ENCODE measurements at regions of chr4 and their contacts with region 1.

Region 1: GRCh38 chr4:186191200-186192065 is at the start of gene CYP4V2:
- DNase-seq: peak; percentile 90
- H3K4me3 Mint-ChIP-seq: peak within 1 kb of the TSS; percentile 93
- H3K27ac Mint-ChIP-seq: peak within 1 kb of the TSS; percentile 92
- H3K4me1 Mint-ChIP-seq: peaks cover 34% of the 10 kb centered on the region
- H3K27me3 Mint-ChIP-seq: no peaks in the 10 kb centered on the region
- total RNA-seq, gene CYP4V2: 4.9 to 5.2 TPM

Region 2: GRCh38 chr4:185849664-185850550 is 341.5 kb before region 1 on chr4:
- CTCF ChIA-PET with region 1: no interaction called
- POLR2A ChIA-PET with region 1: no interaction called
- intact Hi-C with region 1: no loop called
- DNase-seq: no peak
- H3K4me3 Mint-ChIP-seq: no peak overlapping the region
- H3K27ac Mint-ChIP-seq: no peak overlapping the region
- H3K4me1 Mint-ChIP-seq: no peaks in the 10 kb centered on the region
- H3K27me3 Mint-ChIP-seq: peaks cover 2% of the 10 kb centered on the region

Region 3: GRCh38 chr4:186067757-186068385 is 123.6 kb before region 1 on chr4:
- CTCF ChIA-PET with region 1: interaction called, 10 read pairs
- POLR2A ChIA-PET with region 1: no interaction called
- intact Hi-C with region 1: no loop called
- DNase-seq: peak; percentile 58
- H3K4me3 Mint-ChIP-seq: no peak overlapping the region
- H3K27ac Mint-ChIP-seq: no peak overlapping the region
- H3K4me1 Mint-ChIP-seq: peaks cover 15% of the 10 kb centered on the region
- H3K27me3 Mint-ChIP-seq: peaks cover 6% of the 10 kb centered on the region

Region 4: GRCh38 chr4:186144142-186144955 is 47.1 kb before region 1 on chr4:
- CTCF ChIA-PET with region 1: interaction called, 4 read pairs
- POLR2A ChIA-PET with region 1: no interaction called
- intact Hi-C with region 1: loop called (anchors 2 kb)
- DNase-seq: peak; percentile 25
- H3K4me3 Mint-ChIP-seq: peak overlapping the region; percentile 71
- H3K27ac Mint-ChIP-seq: no peak overlapping the region
- H3K4me1 Mint-ChIP-seq: peaks cover 9% of the 10 kb centered on the region
- H3K27me3 Mint-ChIP-seq: peaks cover 39% of the 10 kb centered on the region

Region 5: DNA sequence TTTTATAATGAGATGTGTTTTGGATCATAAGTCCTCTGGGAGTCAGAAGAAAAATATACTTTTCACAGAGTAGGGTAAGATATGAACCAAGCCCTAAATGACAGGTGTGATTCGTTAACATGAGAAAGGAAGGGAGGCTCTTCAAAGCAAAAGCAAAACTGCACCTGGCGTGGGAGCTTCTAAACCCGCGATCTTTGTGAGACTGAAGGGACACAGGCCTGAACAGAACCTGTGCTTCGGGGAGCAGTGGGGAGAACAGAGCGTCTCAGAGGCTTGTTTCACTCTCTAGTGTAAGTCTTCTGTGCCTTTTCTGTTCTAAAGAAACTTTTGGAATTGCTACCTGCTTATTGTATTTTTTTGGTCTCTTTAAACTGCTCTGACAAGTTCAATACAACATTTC is 30.3 kb before region 1 on chr4:
- CTCF ChIA-PET with region 1: interaction called, 3 read pairs
- POLR2A ChIA-PET with region 1: no interaction called
- intact Hi-C with region 1: loop called (anchors 2 kb)
- DNase-seq: peak; percentile 60
- H3K4me3 Mint-ChIP-seq: peak overlapping the region; percentile 40
- H3K27ac Mint-ChIP-seq: no peak overlapping the region
- H3K4me1 Mint-ChIP-seq: peaks cover 5% of the 10 kb centered on the region
- H3K27me3 Mint-ChIP-seq: no peaks in the 10 kb centered on the region

Region 6: DNA sequence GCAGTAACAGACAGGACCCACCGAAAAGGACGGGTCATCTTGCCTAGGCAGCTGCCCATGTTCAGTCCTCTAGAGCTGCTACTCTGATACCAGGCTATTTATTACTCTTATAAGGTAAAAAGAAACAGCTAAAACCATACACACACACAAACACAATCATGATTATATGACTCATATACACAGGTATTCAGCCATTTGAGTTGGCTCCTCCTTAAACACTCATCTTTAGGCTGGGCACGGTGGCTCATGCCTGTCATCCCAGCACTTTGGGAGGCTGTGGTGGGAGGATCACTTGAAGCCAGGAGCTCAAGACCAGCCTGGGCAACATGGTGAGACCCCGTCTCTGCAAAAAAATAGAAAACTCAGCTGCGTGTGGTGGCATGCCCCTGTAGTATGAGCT is 151.1 kb after region 1 on chr4:
- CTCF ChIA-PET with region 1: no interaction called
- POLR2A ChIA-PET with region 1: no interaction called
- intact Hi-C with region 1: no loop called
- DNase-seq: no peak
- H3K4me3 Mint-ChIP-seq: no peak overlapping the region
- H3K27ac Mint-ChIP-seq: no peak overlapping the region
- H3K4me1 Mint-ChIP-seq: no peaks in the 10 kb centered on the region
- H3K27me3 Mint-ChIP-seq: peaks cover 9% of the 10 kb centered on the region

Region 7: DNA sequence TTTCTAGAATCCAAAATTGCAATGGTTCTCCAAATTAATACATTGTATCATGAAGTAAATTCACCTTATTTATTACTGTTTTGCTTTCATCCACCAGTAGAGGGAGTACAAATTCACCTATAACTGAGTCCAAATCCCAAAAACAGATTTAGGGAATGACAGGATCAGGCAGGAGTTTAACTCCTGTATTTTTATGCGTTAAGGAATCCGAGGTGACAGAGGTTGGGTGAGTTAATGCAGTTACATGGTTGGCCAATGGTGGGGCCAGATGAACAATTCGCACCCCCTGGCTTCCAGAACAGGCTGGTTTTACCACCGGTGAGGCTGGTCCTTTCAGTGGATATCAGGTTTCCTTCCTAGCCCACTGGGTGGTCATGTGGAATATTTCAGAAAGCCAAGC is 281.5 kb after region 1 on chr4:
- CTCF ChIA-PET with region 1: no interaction called
- POLR2A ChIA-PET with region 1: no interaction called
- intact Hi-C with region 1: no loop called
- DNase-seq: no peak
- H3K4me3 Mint-ChIP-seq: no peak overlapping the region
- H3K27ac Mint-ChIP-seq: no peak overlapping the region
- H3K4me1 Mint-ChIP-seq: no peaks in the 10 kb centered on the region
- H3K27me3 Mint-ChIP-seq: no peaks in the 10 kb centered on the region